Activated T-helper 2 cell treated with anti-CD3 and anti-CD28 coated beads, Interferon-gamma antibody, Interleukin-2, Interleukin-4, amounts not matched to agents 10 μg/mL and 5 μg/mL and 100 μg/mL, durations not matched to agents 14 hours and 24 hours and 36 hours (primary cell): ENCODE measurements at regions of chr12 and their contacts with region 1.

Region 1: GRCh38 chr12:131239384-131240094 is 285.8 kb downstream of the ADGRD1 start:
- DNase-seq: no peak
- H3K4me3 Mint-ChIP-seq: no peak overlapping the region
- H3K27ac Mint-ChIP-seq: peak overlapping the region; percentile 67
- H3K4me1 Mint-ChIP-seq: peaks cover 6% of the 10 kb centered on the region
- H3K27me3 Mint-ChIP-seq: no peaks in the 10 kb centered on the region

Region 2: GRCh38 chr12:131209082-131210070 is 30.2 kb before region 1 on chr12:
- intact Hi-C with region 1: loop called (anchors 2 kb)
- DNase-seq: no peak
- H3K4me3 Mint-ChIP-seq: peak overlapping the region; percentile 5
- H3K27ac Mint-ChIP-seq: peak overlapping the region; percentile 52
- H3K4me1 Mint-ChIP-seq: peaks cover 24% of the 10 kb centered on the region
- H3K27me3 Mint-ChIP-seq: no peaks in the 10 kb centered on the region